Cardiac septum (tissue), 1 donor: ENCODE measurements at regions of chr22 and their contacts with region 1.

Region 1: GRCh38 chr22:30634471-30635233 is 929 bp upstream of the SLC35E4 start:
- DNase-seq: peak; percentile 94

Region 2: GRCh38 chr22:30591588-30592359 is 42.9 kb before region 1 on chr22 and contains the start of gene PES1:
- intact Hi-C with region 1: no loop called
- DNase-seq: peak; percentile 96
- total RNA-seq, gene PES1: 28.1 TPM

Region 3: GRCh38 chr22:30667494-30668385 is 33.1 kb after region 1 on chr22 and contains the start of gene DUSP18:
- intact Hi-C with region 1: loop called (anchors 2 kb)
- DNase-seq: peak; percentile 98
- total RNA-seq, gene DUSP18: 3.4 TPM

Region 4: DNA sequence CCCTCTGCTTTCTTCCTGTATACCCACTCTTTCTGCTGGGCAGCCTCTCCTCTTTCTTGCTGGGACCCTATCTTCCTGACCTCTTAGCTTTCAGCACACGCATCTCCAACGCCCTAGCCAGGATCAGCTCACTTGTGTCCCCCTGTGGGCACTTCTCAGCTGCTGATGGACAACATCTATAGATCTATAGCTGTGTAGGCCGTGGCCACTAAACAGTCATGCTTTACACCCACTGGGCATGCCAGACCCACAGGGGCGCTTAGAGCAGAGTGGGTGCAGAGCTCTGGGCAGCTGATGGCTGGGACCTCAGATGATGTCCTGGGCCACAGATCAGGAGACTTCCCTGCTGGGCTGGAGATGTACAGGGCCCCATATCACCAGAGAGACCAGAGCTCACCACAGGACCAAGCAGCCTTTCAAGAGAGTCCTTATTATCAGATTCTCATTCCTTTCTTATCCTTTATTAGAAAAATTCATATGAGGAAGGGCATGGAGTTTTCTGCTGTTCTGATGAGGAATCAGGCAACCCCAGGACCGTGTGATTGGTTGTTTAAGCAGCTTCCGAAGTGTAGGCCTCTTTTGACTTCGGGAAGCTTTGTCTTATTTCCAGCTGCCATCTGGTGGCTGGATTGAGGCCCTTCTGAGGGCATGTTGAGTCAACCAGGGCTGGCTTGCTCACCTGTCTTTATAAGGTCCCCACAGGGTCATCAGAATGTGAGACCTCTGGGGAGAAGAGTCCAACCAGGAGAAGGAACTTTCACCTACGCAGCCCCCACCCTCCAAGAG is 120.5 kb after region 1 on chr22:
- intact Hi-C with region 1: loop called (anchors 1 kb)
- DNase-seq: no peak

Region 5: DNA sequence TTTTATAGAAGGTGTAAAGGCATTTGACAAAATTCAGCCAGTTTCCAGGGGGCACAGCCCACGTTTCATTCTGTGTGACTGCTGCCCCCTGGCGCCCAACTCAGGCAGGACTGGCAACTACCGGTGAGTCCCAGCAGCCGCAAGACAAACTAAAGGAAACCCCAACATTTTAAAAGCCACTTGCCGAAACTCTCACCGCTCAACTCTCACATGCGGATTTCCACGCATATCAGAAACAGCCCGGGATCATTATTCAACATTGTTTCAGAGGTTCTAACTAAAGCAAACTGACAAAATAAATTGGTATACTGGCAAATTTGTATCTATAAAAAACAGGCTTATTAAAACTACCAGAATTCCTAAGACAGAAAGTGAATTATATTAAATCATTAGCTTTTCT is 285.8 kb after region 1 on chr22:
- intact Hi-C with region 1: loop called (anchors 5 kb)
- DNase-seq: peak; percentile 84